Activated CD4-positive, alpha-beta memory T cell treated with anti-CD3 and anti-CD28 coated beads, Interleukin-2, amount 10 ng/mL, durations not matched to agents 7 days and 5 days (primary cell): ENCODE measurements at regions of chr6 and their contacts with region 1.

Region 1: DNA sequence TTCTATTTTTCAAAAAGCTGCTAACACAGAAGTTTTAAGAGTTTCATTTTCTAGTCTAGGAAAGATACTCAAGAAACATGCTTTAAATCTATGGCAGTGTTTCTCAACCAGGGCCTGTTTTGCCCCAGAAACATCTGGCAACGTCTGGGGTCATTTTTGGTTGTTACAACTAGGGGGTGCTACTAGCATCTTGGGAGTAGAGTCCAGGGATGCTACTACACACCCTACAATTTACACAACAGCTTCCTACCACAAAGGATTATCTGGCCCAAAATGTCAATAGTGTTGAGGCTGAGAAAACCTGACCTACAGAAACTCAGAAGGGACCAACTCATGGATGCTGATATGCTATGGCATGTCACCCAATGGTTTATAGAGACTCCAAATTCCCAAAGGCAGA is 24.4 kb downstream of the SERAC1 start:
- DNase-seq: no peak
- H3K4me3 Mint-ChIP-seq: no peak overlapping the region
- H3K27ac Mint-ChIP-seq: no peak overlapping the region
- H3K4me1 Mint-ChIP-seq: peaks cover 4% of the 10 kb centered on the region
- H3K27me3 Mint-ChIP-seq: no peaks in the 10 kb centered on the region

Region 2: DNA sequence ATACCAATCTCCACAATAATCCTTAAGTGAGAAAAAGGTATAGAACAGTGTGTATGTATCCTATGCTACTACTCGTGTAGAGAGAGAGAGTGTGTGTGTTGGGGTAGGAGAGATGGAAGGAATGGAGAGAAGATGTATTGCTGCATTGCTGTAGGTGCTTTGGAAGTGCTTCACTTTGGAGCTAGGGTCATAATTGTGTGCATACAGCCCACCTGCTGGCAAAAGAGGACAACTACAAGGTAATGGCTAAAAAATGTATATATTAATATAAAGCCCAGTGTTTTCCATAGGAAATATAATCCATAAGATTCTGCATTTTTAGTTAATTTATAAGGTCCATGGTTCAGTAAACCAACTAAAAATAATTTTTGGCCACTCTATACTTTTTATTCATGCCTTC is 11.8 kb before region 1 on chr6:
- CTCF ChIA-PET with region 1: interaction called, 12 read pairs
- POLR2A ChIA-PET with region 1: no interaction called
- DNase-seq: peak; percentile 23
- H3K4me3 Mint-ChIP-seq: no peak overlapping the region
- H3K27ac Mint-ChIP-seq: no peak overlapping the region
- H3K4me1 Mint-ChIP-seq: no peaks in the 10 kb centered on the region
- H3K27me3 Mint-ChIP-seq: no peaks in the 10 kb centered on the region